Activated CD4-positive, alpha-beta memory T cell treated with anti-CD3 and anti-CD28 coated beads for 36 hours (primary cell): ENCODE measurements at regions of chr19 and their contacts with region 1.

Region 1: GRCh38 chr19:8355631-8356402 is 8.1 kb upstream of the ANGPTL4 start:
- DNase-seq: peak; percentile 19
- H3K4me3 Mint-ChIP-seq: no peak overlapping the region
- H3K27ac Mint-ChIP-seq: no peak overlapping the region
- H3K4me1 Mint-ChIP-seq: peaks cover 8% of the 10 kb centered on the region
- H3K27me3 Mint-ChIP-seq: peaks cover 10% of the 10 kb centered on the region

Region 2: GRCh38 chr19:8342684-8343482 is 12.9 kb before region 1 on chr19 and contains the start of gene KANK3:
- CTCF ChIA-PET with region 1: interaction called, 23 read pairs
- POLR2A ChIA-PET with region 1: no interaction called
- intact Hi-C with region 1: no loop called
- DNase-seq: peak; percentile 97
- H3K4me3 Mint-ChIP-seq: peak within 1 kb of the TSS; percentile 69
- H3K27ac Mint-ChIP-seq: no peak within 1 kb of the TSS
- H3K4me1 Mint-ChIP-seq: peaks cover 10% of the 10 kb centered on the region
- H3K27me3 Mint-ChIP-seq: peaks cover 3% of the 10 kb centered on the region
- total RNA-seq, gene KANK3: 2.3 to 2.9 TPM

Region 3: DNA sequence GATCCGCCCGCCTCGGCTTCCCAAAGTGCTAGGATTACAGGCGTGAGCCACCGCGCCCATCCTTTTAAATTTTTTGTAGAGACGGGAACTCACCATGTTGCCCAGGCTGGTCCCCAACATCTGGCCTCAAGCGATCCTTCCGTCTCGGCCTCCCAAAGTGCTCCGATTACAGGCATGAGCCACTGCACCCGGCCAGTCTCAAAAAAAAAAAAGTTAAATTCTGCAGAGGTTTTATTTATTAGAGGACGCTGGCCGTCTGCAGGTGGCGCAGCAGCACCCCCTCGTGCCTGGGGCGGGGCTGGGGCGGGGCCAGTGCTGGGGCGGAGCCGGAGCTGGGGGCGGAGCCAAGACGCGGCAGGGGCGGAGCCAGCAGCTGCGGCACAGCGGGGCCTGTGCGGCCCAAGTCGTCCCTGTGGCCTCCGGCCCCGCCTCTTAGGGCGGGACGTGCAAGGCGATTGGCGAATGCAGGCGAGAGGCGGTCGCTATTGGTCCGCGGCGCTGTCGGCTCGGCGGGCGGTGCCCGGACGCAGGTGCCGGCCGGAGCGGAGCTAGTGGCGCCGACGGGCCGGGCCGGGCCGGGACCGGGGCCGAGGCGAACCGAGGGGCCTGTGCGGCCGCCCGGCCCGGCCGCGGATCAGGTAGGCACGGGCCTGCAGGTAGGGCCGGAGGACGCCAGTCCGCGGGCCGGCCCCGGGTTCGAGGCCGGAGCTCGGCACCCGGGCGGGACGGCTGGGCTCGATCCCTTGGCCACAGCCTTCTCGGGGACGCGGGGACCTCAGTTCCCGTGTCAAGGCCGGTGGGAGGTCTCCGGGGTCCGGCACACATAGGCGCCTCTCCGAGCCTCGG is 57.2 kb after region 1 on chr19 and contains the start of gene MARCHF2:
- CTCF ChIA-PET with region 1: interaction called, 31 read pairs
- POLR2A ChIA-PET with region 1: no interaction called
- intact Hi-C with region 1: no loop called
- DNase-seq: peak; percentile 98
- H3K4me3 Mint-ChIP-seq: peak within 1 kb of the TSS; percentile 67
- H3K27ac Mint-ChIP-seq: no peak within 1 kb of the TSS
- H3K4me1 Mint-ChIP-seq: peaks cover 11% of the 10 kb centered on the region
- H3K27me3 Mint-ChIP-seq: no peaks in the 10 kb centered on the region
- total RNA-seq, gene MARCHF2: 14.5 to 16.0 TPM

Region 4: DNA sequence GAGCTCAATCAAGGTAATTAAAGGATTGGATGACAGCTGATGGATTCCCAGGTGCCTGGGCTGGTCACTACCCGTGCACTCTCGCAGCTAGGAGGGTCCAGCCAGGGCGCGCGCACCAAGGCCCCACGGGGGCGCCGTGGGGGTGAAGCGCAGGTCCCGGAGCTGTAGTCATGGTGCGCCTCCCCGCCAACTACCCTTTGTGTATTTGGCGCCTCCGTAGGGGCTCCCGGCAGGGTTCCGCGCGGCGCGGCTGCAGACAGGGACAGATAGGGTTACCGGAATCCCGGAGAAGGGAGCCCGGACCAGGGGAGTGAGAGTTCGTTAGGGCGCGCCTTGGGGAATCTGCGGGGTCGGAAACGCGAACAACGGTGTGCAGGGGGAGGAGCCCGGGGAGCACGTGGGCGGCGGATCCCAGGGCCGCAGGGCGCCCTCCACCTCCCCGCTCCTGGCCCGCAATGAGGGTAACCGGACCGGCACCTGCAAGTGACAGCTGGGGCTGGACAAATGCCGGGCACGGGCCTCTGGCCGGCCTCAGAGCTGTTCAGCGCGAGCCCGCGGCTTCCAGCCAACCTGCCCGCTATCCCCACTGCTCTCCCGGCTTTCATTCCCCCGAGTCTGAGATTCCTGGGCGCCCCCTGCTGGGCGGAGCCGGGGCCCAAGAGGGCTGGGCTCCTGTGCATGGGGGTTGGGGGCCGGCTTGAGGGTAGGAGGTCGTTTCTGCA is 150.0 kb after region 1 on chr19:
- CTCF ChIA-PET with region 1: interaction called, 24 read pairs
- POLR2A ChIA-PET with region 1: no interaction called
- intact Hi-C with region 1: loop called (anchors 2 kb)
- DNase-seq: peak; percentile 81
- H3K4me3 Mint-ChIP-seq: peak overlapping the region; percentile 79
- H3K27ac Mint-ChIP-seq: peak overlapping the region; percentile 30
- H3K4me1 Mint-ChIP-seq: peaks cover 7% of the 10 kb centered on the region
- H3K27me3 Mint-ChIP-seq: no peaks in the 10 kb centered on the region